Activated CD4-positive, alpha-beta memory T cell treated with anti-CD3 and anti-CD28 coated beads, Interleukin-2, amount 10 ng/mL, durations not matched to agents 7 days and 5 days (primary cell): ENCODE measurements at regions of chr5 and their contacts with region 1.

Region 1: GRCh38 chr5:87780831-87781760 is 368.4 kb upstream of the CCNH start:
- DNase-seq: peak; percentile 79
- H3K4me3 Mint-ChIP-seq: no peak overlapping the region
- H3K27ac Mint-ChIP-seq: no peak overlapping the region
- H3K4me1 Mint-ChIP-seq: no peaks in the 10 kb centered on the region
- H3K27me3 Mint-ChIP-seq: peaks cover 16% of the 10 kb centered on the region

Region 2: GRCh38 chr5:88680253-88681132 is 899.4 kb after region 1 on chr5:
- CTCF ChIA-PET with region 1: interaction called, 27 read pairs
- POLR2A ChIA-PET with region 1: no interaction called
- DNase-seq: peak; percentile 77
- H3K4me3 Mint-ChIP-seq: peak overlapping the region; percentile 39
- H3K27ac Mint-ChIP-seq: no peak overlapping the region
- H3K4me1 Mint-ChIP-seq: peaks cover 21% of the 10 kb centered on the region
- H3K27me3 Mint-ChIP-seq: peaks cover 81% of the 10 kb centered on the region

Region 3: GRCh38 chr5:88698290-88698689 is 917.2 kb after region 1 on chr5:
- CTCF ChIA-PET with region 1: interaction called, 38 read pairs
- POLR2A ChIA-PET with region 1: no interaction called
- DNase-seq: no peak
- H3K4me3 Mint-ChIP-seq: no peak overlapping the region
- H3K27ac Mint-ChIP-seq: no peak overlapping the region
- H3K4me1 Mint-ChIP-seq: no peaks in the 10 kb centered on the region
- H3K27me3 Mint-ChIP-seq: peaks cover 56% of the 10 kb centered on the region